ENCODE measurements at regions of chr5 and their contacts with region 1.

Region 1: DNA sequence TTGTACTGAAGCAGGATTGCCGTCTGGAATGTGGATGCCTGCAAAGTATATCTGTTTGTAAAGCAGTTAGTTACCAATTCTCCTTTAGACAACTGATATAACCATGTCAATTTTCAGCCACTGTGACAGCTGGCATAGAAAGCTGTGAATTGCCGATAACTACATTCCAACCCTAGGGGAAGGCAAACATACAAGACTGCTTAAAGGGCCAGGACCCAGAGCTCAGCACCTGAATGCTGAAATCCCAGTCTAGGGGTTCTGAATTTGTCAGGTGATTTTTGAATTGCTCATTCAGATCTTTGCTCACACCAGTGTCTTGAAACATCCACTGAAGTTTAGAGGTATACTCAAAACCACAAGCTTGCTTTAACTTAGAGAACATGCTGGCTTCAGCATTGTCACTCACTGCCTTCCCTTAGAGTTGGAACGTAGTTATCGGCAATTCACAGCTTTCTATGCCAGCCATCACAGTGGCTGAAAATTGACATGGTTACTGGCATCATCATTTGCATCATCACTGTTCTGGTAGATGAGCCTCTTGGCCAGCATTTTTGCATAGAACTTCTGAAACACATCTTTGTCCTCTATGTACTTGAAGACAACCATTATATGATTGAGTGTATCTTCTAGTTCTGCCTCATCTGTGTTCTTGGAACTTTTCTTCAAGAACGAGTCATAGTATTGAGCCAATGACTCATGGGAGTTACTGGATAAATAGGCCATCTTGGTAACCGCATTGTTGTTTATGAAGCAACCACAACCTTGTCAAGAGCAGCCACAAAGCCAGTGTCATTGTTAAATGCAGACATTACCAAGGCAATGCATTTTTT is 82.1 kb downstream of the CCDC192 start:
- DNase-seq: peak; percentile 87
- H3K4me3 Mint-ChIP-seq: peak overlapping the region; percentile 58
- H3K27ac Mint-ChIP-seq: peak overlapping the region; percentile 92
- H3K4me1 Mint-ChIP-seq: peaks cover 29% of the 10 kb centered on the region
- H3K27me3 Mint-ChIP-seq: no peaks in the 10 kb centered on the region

Region 2: GRCh38 chr5:126449751-126450271 is 1335.5 kb before region 1 on chr5:
- intact Hi-C with region 1: loop called (anchors 5 kb)
- DNase-seq: peak; percentile 88
- H3K4me3 Mint-ChIP-seq: peak overlapping the region; percentile 91
- H3K27ac Mint-ChIP-seq: peak overlapping the region; percentile 100
- H3K4me1 Mint-ChIP-seq: peaks cover 57% of the 10 kb centered on the region
- H3K27me3 Mint-ChIP-seq: no peaks in the 10 kb centered on the region

Region 3: DNA sequence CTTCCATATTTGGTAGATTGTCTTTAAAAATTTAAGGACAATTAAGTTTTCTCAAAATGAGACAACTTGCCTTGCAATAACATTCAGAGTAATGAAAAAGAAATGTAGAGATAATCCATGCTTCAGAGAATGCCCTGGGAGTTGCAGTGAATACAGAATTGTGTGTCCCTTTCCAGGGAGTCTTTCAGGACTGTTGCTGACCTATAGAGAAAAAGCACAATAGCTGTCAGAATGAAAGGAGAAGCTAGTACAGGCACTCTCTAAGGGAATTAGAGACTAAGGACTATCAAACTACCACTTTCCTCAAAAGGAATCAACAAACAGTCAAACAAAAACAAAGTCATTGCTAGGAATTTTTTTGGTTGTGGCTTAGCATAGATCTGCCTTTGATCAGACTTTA is 10.9 kb after region 1 on chr5:
- intact Hi-C with region 1: loop called (anchors 1 kb)
- DNase-seq: no peak
- H3K4me3 Mint-ChIP-seq: no peak overlapping the region
- H3K27ac Mint-ChIP-seq: no peak overlapping the region
- H3K4me1 Mint-ChIP-seq: no peaks in the 10 kb centered on the region
- H3K27me3 Mint-ChIP-seq: peaks cover 4% of the 10 kb centered on the region

Region 4: DNA sequence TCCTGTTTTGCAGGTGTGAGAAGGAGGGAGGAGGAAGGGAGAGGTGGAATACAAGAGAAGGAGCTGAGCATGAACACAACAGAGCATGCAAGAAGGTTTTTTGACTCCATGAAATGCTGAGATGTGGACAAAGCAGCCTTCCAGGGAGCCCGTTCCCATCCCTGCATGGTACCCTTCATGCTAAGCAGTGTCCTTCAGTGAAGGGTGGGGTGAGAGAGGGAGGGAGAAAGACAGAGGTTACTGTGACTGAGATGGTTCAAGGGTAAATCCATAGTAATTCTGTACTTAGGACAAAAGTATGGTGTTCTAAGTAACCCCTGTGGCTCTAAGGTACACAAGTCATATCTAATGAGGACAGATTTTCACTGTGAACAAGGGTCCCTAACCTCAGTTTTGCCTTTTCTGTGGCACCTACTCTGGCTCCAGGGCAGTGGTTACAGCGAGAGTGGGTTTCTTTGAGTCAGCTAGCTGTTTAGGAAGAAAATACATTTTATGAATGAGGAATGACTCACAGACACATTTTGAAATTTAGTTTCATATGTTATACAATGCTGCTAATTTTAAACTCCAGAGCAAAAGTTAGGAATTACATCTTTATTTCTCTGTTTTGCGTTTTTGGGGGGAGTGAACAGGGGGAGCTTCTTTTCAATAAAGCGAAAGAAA is 113.4 kb after region 1 on chr5:
- intact Hi-C with region 1: loop called (anchors 2 kb)
- DNase-seq: no peak
- H3K4me3 Mint-ChIP-seq: no peak overlapping the region
- H3K27ac Mint-ChIP-seq: no peak overlapping the region
- H3K4me1 Mint-ChIP-seq: peaks cover 2% of the 10 kb centered on the region
- H3K27me3 Mint-ChIP-seq: peaks cover 3% of the 10 kb centered on the region

Measured in activated CD4-positive, alpha-beta T cell treated with anti-CD3 and anti-CD28 coated beads, Interleukin-2, amount 10 ng/mL, durations not matched to agents 24 days and 14 days (primary cell).